Tibial artery (tissue), 4 donors: ENCODE measurements at regions of chr4 and their contacts with region 1.

Region 1: GRCh38 chr4:674172-675035 is at the starts of genes ATP5ME and MYL5:
- DNase-seq: peak; percentile 95 to 98
- H3K4me3 ChIP-seq: peak within 1 kb of the TSS; percentile 94 to 97
- H3K27ac ChIP-seq: peak within 1 kb of the TSS; percentile 96 to 97
- H3K4me1 ChIP-seq: peaks cover 0 to 34% (median 17%) of the 10 kb centered on the region in 4 donors
- H3K27me3 ChIP-seq: peaks cover 0 to 33% of the 10 kb centered on the region in 2 donors
- CTCF ChIP-seq: peak; percentile 87 to 89

Region 2: GRCh38 chr4:508675-509638 is 165.4 kb before region 1 on chr4:
- intact Hi-C with region 1: loop called (anchors 10 kb)
- DNase-seq: no peak
- H3K4me3 ChIP-seq: no peak overlapping the region
- H3K27ac ChIP-seq: no peak overlapping the region
- H3K4me1 ChIP-seq: no peaks in the 10 kb centered on the region
- H3K27me3 ChIP-seq: no peaks in the 10 kb centered on the region
- CTCF ChIP-seq: no peak

Region 3: GRCh38 chr4:532588-533317 is 141.7 kb before region 1 on chr4:
- intact Hi-C with region 1: no loop called
- DNase-seq: no peak
- H3K4me3 ChIP-seq: no peak overlapping the region
- H3K27ac ChIP-seq: no peak overlapping the region
- H3K4me1 ChIP-seq: no peaks in the 10 kb centered on the region
- H3K27me3 ChIP-seq: no peaks in the 10 kb centered on the region
- CTCF ChIP-seq: no peak

Region 4: DNA sequence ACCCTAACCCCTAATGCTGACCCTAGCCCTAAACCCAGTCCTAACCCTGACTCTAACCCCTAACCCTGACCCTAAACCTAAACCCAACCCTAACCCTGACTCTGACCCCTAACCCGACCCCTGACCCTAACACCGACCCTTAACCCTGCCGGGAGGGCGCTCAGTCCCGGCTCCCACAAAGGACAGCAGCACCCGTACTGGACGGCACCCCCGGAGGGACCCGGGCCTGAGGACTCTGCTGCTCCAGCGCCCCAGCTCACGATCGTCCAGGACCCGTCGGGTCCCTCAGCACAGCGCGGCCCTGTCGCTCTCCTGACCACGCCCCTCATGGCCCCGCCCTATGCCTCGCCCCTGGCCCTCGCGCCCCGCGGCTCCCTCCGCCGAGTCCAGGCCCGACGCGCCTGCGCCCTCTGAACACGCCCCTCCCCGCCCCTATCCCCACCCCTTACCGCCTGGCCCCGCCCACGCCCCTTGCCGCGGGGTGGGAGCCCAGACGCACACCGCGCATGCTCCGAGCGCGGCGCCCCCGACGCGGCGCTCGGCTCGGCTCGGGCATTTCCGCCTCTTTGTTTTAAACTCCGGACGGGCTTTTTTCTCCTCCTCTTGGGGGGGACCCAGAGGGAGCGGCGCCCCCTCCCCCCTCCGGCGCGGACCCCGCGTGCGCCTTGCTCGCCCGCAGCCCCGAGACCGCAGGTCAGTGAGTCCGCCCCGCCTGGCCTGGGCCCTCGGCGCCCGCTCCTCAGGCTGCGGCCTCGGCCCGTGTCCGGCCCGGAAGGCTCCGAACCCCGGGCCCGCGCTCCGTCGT is 31.1 kb after region 1 on chr4 and contains the start of gene PCGF3:
- intact Hi-C with region 1: loop called (anchors 1 kb)
- DNase-seq: peak; percentile 94 to 97
- H3K4me3 ChIP-seq: peak within 1 kb of the TSS; percentile 92 to 99
- H3K27ac ChIP-seq: peak within 1 kb of the TSS; percentile 86 to 93
- H3K4me1 ChIP-seq: peaks cover 0 to 35% (median 26%) of the 10 kb centered on the region in 4 donors
- H3K27me3 ChIP-seq: no peaks in the 10 kb centered on the region
- CTCF ChIP-seq: no peak

Region 5: GRCh38 chr4:825238-825835 is 150.9 kb after region 1 on chr4:
- intact Hi-C with region 1: no loop called
- DNase-seq: no peak
- H3K4me3 ChIP-seq: peak overlapping the region; percentile 25 to 49
- H3K27ac ChIP-seq: no peak overlapping the region
- H3K4me1 ChIP-seq: peaks cover 0 to 24% (median 18%) of the 10 kb centered on the region in 4 donors
- H3K27me3 ChIP-seq: peaks cover 8 to 95% of the 10 kb centered on the region in 2 donors
- CTCF ChIP-seq: no peak

Region 6: DNA sequence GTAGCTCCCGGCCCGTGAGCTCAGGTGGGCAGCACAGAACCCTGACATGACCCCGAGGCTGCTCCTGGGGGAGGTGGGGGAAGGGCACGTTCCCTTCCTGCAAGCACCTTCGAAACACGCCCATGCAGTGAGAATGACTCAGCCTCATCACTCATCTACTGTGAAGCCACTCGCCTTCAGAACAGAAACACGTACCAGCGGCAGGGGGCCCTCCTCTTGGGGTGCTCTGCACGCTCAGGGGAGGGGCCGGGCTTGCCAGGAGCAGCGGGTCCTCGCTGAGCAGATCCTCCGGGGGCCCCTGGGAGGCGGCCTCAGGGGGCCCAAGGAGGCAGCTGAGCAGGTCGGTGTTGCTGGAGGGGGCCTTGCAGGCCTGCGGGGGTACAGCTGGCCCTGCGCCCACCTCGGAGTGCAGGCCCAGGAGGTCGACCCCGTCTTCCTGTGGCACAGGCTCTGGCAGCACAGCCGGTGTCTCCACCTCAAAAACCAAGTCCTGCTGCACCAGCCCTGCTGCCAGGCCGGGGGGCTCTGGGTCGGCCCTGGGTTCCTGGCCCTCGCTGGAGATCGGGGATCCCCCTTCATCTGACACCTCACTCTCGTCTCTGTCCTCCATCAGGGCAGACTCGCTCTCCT is 192.5 kb after region 1 on chr4:
- intact Hi-C with region 1: no loop called
- DNase-seq: no peak
- H3K4me3 ChIP-seq: no peak overlapping the region
- H3K27ac ChIP-seq: no peak overlapping the region
- H3K4me1 ChIP-seq: no peaks in the 10 kb centered on the region
- H3K27me3 ChIP-seq: no peaks in the 10 kb centered on the region
- CTCF ChIP-seq: no peak